ENCODE measurements at regions of chr3 and their contacts with region 1.

Region 1: DNA sequence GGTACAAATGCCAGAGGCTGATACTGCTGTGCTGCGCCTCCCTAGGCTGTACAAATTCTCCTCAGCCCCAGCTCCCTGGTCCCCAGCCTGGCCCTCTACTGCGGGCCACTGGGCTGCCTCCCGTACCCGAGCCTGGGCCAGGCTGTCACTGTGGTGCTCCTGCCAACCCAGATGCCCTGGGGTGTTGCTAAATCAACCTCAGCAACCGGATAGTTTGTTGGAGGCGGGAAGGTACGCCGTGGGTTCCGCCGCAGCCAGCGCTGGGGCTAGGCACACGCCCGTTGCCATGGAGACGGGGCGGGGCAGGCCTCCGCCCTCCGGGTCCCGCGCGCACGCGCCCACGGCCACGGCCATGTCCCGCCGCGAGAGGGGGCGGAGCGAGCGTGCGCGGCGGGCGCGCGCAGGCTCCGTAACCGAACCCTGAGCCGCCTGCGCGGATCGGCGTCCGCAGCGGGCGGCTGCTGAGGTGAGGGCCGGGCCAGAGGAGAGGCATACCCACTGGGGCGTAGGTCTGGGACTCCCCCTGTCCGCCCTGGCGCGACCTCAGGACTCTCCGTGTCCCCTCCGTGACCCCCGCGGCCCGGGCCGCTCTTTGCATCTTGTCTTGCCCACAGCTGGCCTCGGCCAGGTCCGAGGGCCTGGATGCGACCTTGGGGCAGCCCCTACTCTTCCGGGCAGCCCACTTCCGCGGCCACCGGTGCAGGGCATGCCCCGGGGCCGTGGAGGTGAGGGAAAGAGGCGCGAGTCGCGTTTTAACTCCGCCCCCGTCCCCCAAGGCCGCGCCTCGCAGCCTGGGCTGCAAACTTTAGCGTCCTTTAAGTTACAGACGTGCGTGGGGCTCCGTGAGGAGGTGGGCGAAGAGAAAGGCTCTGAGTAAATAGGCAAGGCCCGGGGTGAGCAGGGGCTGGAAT is at the start of gene TEX264:
- DNase-seq: peak; percentile 95
- H3K4me3 Mint-ChIP-seq: peak within 1 kb of the TSS; percentile 86
- H3K27ac Mint-ChIP-seq: peak within 1 kb of the TSS; percentile 87
- H3K4me1 Mint-ChIP-seq: peaks cover 65% of the 10 kb centered on the region
- H3K27me3 Mint-ChIP-seq: no peaks in the 10 kb centered on the region
- total RNA-seq, gene TEX264: 50.3 and 52.0 TPM in 2 replicates

Region 2: DNA sequence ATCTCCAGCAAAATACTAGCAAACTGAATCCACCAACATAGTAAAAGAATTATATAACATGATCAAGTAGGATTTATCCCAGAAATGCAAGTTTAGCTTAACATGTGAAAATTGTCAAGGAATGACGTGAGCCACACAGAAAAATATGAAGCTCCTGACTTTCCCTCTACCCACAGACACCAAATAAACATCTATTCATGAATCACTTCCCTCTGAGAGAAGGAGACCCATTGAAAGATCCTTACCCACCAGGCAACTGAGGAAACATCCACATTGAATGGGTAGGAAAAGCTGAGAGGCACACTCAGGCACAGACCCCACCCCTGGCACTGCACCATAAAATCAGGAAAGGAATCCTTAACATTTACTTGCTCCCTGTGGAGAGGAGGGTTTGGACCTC is 388.1 kb before region 1 on chr3:
- intact Hi-C with region 1: no loop called
- DNase-seq: no peak
- H3K4me3 Mint-ChIP-seq: no peak overlapping the region
- H3K27ac Mint-ChIP-seq: no peak overlapping the region
- H3K4me1 Mint-ChIP-seq: no peaks in the 10 kb centered on the region
- H3K27me3 Mint-ChIP-seq: no peaks in the 10 kb centered on the region

Region 3: GRCh38 chr3:51391075-51391567 is 280.0 kb before region 1 on chr3 and contains the start of gene RBM15B:
- intact Hi-C with region 1: loop called (anchors 1 kb)
- DNase-seq: peak; percentile 98
- H3K4me3 Mint-ChIP-seq: peak within 1 kb of the TSS; percentile 85
- H3K27ac Mint-ChIP-seq: peak within 1 kb of the TSS; percentile 86
- H3K4me1 Mint-ChIP-seq: peaks cover 66% of the 10 kb centered on the region
- H3K27me3 Mint-ChIP-seq: no peaks in the 10 kb centered on the region
- total RNA-seq, gene RBM15B: 38.5 and 39.6 TPM in 2 replicates

Region 4: DNA sequence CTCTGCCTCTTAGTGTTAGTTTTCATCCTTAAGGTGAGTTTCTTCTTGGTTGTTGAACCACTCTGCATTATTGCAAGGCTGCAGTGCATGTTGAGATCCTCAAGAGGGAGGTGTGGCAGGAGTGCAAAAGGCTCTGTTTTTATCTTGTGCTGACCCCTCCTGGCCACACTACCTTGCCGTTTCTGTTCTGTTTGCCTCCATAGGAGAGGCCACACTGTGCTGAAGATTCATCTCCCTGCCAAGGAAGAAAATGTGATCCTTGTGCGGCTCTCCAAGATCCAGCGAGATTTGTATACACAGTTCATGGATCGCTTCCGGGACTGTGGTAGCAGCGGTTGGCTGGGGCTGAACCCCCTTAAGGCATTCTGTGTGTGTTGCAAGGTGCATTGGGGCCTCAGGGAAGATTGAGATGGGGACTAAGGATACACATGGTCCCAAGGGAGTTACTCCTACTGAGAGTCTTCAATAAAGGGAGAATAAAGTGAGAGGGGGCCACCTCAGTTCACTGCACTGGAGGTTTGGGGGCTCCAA is 33.1 kb before region 1 on chr3:
- intact Hi-C with region 1: loop called (anchors 1 kb)
- DNase-seq: peak; percentile 11
- H3K4me3 Mint-ChIP-seq: no peak overlapping the region
- H3K27ac Mint-ChIP-seq: no peak overlapping the region
- H3K4me1 Mint-ChIP-seq: no peaks in the 10 kb centered on the region
- H3K27me3 Mint-ChIP-seq: no peaks in the 10 kb centered on the region

Region 5: GRCh38 chr3:51709004-51709420 is 37.9 kb after region 1 on chr3:
- intact Hi-C with region 1: loop called (anchors 2 kb)
- DNase-seq: no peak
- H3K4me3 Mint-ChIP-seq: no peak overlapping the region
- H3K27ac Mint-ChIP-seq: peak overlapping the region; percentile 35
- H3K4me1 Mint-ChIP-seq: peaks cover 8% of the 10 kb centered on the region
- H3K27me3 Mint-ChIP-seq: peaks cover 4% of the 10 kb centered on the region

Region 6: GRCh38 chr3:52278510-52279069 is 607.5 kb after region 1 on chr3 and contains the start of gene WDR82:
- intact Hi-C with region 1: loop called (anchors 2 kb)
- DNase-seq: peak; percentile 95
- H3K4me3 Mint-ChIP-seq: peak within 1 kb of the TSS; percentile 97
- H3K27ac Mint-ChIP-seq: peak within 1 kb of the TSS; percentile 99
- H3K4me1 Mint-ChIP-seq: peaks cover 70% of the 10 kb centered on the region
- H3K27me3 Mint-ChIP-seq: no peaks in the 10 kb centered on the region
- total RNA-seq, gene WDR82: 105 and 107 TPM in 2 replicates